ENCODE measurements at regions of chr1 and their contacts with region 1.

Region 1: DNA sequence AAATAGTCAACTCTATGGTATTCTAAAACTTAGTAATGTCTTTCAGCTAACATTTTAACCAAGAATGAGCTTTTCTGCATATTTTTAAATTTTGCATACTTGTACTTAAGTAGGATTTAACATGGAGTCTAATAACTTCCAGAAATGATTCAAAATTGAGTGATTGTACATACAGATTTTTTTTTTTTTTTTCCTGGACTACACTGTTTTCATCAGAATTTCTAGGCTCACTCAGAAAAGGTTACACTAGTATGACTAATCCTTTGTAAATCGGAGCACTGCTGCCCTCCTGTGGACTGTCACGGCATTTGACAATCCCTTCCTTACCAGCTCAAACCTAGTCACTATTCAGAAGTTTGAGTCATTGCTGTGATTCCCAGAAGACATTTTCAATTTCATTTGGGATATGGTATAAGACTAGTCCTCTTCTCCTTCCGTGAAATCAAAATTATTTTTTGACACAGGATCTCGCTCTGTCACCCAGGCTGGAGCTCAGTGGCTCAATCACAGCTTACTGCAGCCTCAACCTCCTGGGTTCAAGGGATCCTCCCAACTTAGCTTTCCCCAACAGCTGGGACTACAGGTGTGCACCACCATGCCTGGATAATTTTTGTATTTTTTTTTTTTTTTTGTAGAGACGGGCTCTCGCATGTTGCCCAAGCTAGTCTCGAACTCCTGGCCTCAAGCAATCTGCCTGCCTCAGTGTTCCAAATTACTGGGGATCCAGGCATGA is 45.5 kb downstream of the CD46 start:
- DNase-seq: peak; percentile 81
- H3K4me3 Mint-ChIP-seq: no peak overlapping the region
- H3K27ac Mint-ChIP-seq: no peak overlapping the region
- H3K4me1 Mint-ChIP-seq: peaks cover 39% of the 10 kb centered on the region
- H3K27me3 Mint-ChIP-seq: no peaks in the 10 kb centered on the region

Region 2: DNA sequence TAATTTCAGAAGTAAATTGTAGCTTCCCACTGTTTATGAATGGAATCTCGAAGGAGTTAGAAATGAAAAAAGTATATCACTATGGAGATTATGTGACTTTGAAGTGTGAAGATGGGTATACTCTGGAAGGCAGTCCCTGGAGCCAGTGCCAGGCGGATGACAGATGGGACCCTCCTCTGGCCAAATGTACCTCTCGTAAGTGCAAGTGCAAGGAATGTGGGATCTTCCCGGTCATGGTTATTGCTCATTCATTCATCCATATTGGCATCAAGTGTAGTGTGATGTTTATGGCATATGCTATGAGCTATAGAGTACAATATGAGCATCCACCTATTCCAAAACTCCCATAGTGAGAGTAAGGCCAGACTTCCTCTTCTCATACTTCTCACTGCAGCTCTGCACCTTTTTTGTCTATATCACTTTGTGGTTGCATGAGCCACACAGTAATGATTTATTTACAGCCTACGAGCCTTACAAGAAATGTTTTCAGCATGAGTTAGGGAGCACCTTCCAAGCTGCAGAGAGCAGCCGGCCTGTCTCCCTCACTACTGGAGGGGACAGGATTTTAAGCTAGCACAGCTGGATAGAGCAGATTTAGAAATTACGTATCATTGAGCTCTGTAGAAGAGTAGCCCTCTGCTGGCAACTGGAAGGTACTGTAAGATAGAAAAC is 177.4 kb before region 1 on chr1:
- CTCF ChIA-PET with region 1: interaction called, 15 read pairs
- POLR2A ChIA-PET with region 1: interaction called, 3 read pairs
- DNase-seq: no peak
- H3K4me3 Mint-ChIP-seq: no peak overlapping the region
- H3K27ac Mint-ChIP-seq: no peak overlapping the region
- H3K4me1 Mint-ChIP-seq: no peaks in the 10 kb centered on the region
- H3K27me3 Mint-ChIP-seq: peaks cover 12% of the 10 kb centered on the region

Region 3: GRCh38 chr1:207711285-207711684 is 86.1 kb before region 1 on chr1:
- CTCF ChIA-PET with region 1: interaction called, 21 read pairs
- POLR2A ChIA-PET with region 1: no interaction called
- DNase-seq: no peak
- H3K4me3 Mint-ChIP-seq: no peak overlapping the region
- H3K27ac Mint-ChIP-seq: no peak overlapping the region
- H3K4me1 Mint-ChIP-seq: no peaks in the 10 kb centered on the region
- H3K27me3 Mint-ChIP-seq: no peaks in the 10 kb centered on the region

Region 4: GRCh38 chr1:207811920-207812720 is 14.7 kb after region 1 on chr1:
- CTCF ChIA-PET with region 1: interaction called, 24 read pairs
- POLR2A ChIA-PET with region 1: interaction called, 11 read pairs
- DNase-seq: peak; percentile 18
- H3K4me3 Mint-ChIP-seq: no peak overlapping the region
- H3K27ac Mint-ChIP-seq: no peak overlapping the region
- H3K4me1 Mint-ChIP-seq: peaks cover 53% of the 10 kb centered on the region
- H3K27me3 Mint-ChIP-seq: no peaks in the 10 kb centered on the region

Region 5: GRCh38 chr1:207868774-207869721 is 71.7 kb after region 1 on chr1:
- CTCF ChIA-PET with region 1: interaction called, 32 read pairs
- POLR2A ChIA-PET with region 1: interaction called, 16 read pairs
- DNase-seq: peak; percentile 76
- H3K4me3 Mint-ChIP-seq: peak overlapping the region; percentile 93
- H3K27ac Mint-ChIP-seq: peak overlapping the region; percentile 91
- H3K4me1 Mint-ChIP-seq: peaks cover 84% of the 10 kb centered on the region
- H3K27me3 Mint-ChIP-seq: no peaks in the 10 kb centered on the region

Region 6: DNA sequence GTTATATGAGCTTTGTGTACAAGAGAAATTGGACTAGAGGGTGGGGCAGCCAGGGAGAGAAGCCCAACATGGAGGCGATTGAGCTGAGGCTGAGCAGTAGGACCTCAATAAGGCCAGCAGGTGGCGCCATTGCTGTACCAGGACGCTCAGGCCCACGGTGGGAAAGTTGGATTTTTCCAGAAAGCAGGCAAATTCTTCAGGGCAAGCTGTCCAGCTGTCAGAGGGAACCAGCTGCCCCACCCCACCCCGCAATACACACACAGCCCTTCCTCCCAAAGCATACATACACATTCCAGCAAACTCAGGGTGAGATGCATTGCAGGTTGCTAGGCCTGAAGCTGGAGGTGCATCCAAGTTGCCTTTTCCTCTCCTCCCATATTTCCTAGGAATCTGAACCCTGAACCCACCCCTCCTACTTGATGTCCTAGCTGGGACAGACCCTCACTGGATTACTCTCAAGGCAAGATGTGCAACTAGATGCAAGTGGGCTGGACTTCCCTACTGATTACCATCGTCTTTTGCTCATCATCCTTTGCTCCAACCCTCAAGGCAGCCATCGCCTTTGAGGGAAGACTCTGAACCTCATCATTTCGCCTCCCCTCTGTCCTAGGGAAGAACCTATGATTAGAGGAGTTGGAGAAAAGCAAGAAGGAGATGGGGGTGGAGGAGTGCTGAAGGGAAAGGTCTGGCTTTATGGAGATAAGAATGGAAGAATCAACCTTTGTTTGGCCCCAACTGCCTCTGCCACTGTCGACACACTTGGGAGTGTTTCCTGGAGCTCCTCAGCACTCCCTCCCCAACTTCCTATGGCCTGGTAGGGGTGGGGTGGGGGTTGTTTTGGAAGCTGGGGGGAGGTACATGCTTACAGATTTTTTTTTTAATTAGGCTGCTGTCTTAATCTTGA is 88.0 kb after region 1 on chr1:
- CTCF ChIA-PET with region 1: interaction called, 28 read pairs
- POLR2A ChIA-PET with region 1: interaction called, 5 read pairs
- DNase-seq: peak; percentile 77
- H3K4me3 Mint-ChIP-seq: no peak overlapping the region
- H3K27ac Mint-ChIP-seq: peak overlapping the region; percentile 97
- H3K4me1 Mint-ChIP-seq: peaks cover 43% of the 10 kb centered on the region
- H3K27me3 Mint-ChIP-seq: peaks cover 3% of the 10 kb centered on the region

Measured in activated CD4-positive, alpha-beta memory T cell treated with anti-CD3 and anti-CD28 coated beads, Interleukin-2, amount 10 ng/mL, durations not matched to agents 7 days and 5 days (primary cell).